A549 (cell line): ENCODE measurements at regions of chr1 and their contacts with region 1.

Region 1: DNA sequence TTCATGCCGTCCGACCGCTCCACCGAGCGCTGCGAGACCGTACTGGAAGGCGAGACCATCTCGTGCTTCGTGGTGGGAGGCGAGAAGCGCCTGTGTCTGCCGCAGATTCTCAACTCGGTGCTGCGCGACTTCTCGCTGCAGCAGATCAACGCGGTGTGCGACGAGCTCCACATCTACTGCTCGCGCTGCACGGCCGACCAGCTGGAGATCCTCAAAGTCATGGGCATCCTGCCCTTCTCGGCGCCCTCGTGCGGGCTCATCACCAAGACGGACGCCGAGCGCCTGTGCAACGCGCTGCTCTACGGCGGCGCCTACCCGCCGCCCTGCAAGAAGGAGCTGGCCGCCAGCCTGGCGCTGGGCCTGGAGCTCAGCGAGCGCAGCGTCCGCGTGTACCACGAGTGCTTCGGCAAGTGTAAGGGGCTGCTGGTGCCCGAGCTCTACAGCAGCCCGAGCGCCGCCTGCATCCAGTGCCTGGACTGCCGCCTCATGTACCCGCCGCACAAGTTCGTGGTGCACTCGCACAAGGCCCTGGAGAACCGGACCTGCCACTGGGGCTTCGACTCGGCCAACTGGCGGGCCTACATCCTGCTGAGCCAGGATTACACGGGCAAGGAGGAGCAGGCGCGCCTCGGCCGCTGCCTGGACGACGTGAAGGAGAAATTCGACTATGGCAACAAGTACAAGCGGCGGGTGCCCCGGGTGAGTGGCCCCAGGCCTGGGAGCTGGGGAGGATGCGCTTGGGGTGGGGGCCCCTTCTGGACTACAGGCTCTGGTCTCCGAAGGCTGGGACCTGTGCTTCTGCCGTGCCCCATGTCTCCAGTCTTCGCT is 1.1 kb downstream of the SKI start:
- DNase-seq: peak in 1 of 2 experiments; percentile 68
- ATAC-seq: peak; percentile 11 to 26; a peak in 3 of 6 replicates
- H3K4me3 ChIP-seq: peak overlapping the region; percentile 67
- H3K27ac ChIP-seq: peak overlapping the region; percentile 76 to 83
- H3K4me1 ChIP-seq: peaks cover 46% of the 10 kb centered on the region
- CTCF ChIP-seq: no peak
- EP300 ChIP-seq: no peak
- POLR2A ChIP-seq: no peak
- RAD21 ChIP-seq: peak in 1 of 2 experiments; percentile 13; a peak in 1 of 5 replicates

Region 2: DNA sequence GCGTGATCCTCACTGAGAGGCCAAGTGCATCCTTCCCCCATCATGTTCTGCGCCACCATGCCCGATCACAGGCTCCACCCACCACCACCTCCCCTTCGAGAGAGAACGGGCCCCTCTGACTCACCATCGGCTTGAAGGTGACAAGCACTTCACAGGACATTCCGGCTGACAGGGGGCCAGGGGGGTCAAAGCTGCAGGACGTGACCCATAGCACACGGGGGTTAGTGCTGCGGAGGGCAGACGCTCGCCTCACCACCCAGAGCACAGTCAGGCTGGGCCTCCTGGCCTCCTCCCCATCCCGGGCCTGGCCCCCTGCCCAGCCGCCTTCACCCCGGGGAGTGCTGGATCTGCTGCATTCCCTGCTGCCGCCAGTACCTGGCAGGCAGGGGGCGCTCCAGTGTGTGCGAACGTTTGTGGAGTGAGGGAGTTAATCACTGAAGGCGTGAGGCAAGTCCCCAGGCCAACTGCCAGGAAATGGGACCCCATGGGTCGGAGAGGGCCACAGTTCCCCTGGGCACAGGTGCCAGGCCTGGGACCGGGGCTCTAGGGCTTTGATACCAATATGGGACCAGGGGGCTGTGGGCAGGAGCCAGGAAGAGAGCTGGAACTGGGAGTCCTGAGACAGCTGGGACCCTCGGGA is 269.3 kb before region 1 on chr1:
- CTCF ChIA-PET with region 1: no interaction called
- POLR2A ChIA-PET with region 1: no interaction called
- DNase-seq: peak; percentile 78 to 89
- ATAC-seq: peak; percentile 92 to 95
- H3K4me3 ChIP-seq: peak overlapping the region; percentile 36
- H3K27ac ChIP-seq: peak overlapping the region; percentile 21 to 29; a peak in 2 of 6 replicates
- H3K4me1 ChIP-seq: peaks cover 6% of the 10 kb centered on the region; the same call in 1 of the 3 replicates
- CTCF ChIP-seq: peak; percentile 75
- EP300 ChIP-seq: no peak
- POLR2A ChIP-seq: no peak
- RAD21 ChIP-seq: peak; percentile 62 to 71

Region 3: GRCh38 chr1:2205191-2205952 is 23.9 kb before region 1 on chr1:
- CTCF ChIA-PET with region 1: interaction called, 11 read pairs
- POLR2A ChIA-PET with region 1: interaction called, 4 read pairs
- DNase-seq: peak in 1 of 2 experiments; percentile 92
- ATAC-seq: peak; percentile 36 to 51; a peak in 5 of 6 replicates
- H3K4me3 ChIP-seq: peak overlapping the region; percentile 53
- H3K27ac ChIP-seq: peak overlapping the region; percentile 85 to 86
- H3K4me1 ChIP-seq: peaks cover 52% of the 10 kb centered on the region
- CTCF ChIP-seq: no peak
- EP300 ChIP-seq: no peak
- POLR2A ChIP-seq: 0 out of 2 replicates have a peak, but pooled peaks have one; percentile 13
- RAD21 ChIP-seq: no peak

Region 4: DNA sequence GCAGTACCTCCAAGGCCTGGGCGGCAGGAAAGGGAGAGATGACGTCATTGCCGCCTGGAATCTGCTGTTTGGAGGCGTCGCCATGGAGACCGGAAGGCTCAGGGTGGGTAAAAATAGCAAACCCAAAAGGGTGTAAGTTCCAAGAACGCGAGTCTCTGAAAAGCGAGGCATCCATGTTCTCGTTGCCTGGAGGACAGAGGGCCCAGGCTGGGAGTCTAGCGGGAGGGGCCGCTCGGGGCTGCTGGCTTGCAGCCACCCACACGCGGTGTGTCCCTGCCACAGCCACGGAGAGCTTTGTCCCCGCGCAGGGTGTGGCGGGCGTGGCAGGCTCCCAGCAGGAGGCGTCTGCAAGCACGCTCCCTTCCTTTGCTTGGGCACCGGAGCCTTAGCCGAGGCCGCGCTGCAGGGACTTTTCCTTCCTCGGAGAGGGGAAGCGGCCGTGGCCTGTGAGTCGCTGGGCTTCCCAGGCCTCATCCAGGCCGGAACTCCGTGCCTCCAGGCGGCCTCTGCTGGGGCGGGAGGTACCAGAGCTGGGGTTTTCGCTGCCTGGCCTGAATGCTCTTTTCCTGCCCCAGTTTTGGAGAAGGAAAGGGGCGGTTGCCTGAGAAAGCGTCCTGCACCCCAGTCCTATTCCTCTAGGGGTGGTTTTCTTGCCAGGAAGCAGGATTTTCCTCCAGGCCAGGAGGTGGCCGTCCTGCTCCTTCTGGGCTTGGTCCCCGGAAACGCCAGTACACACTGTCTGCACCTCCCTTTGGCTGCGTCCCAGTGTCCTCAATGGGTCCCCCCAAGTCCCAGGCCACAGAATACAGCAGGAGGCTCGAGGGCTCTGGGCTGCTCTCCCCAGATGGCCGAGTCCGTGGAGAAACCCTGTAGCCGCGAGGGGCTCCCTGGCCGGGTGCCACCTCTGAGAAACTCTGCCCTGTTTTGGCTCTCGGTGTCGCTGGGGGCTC is 16.4 kb before region 1 on chr1:
- CTCF ChIA-PET with region 1: interaction called, 14 read pairs
- POLR2A ChIA-PET with region 1: interaction called, 9 read pairs
- DNase-seq: peak; percentile 90 to 95
- ATAC-seq: peak; percentile 64 to 72
- H3K4me3 ChIP-seq: peak overlapping the region; percentile 32
- H3K27ac ChIP-seq: peak overlapping the region; percentile 99 to 100
- H3K4me1 ChIP-seq: peaks cover 55% of the 10 kb centered on the region
- CTCF ChIP-seq: no peak
- EP300 ChIP-seq: no peak
- POLR2A ChIP-seq: peak; percentile 41
- RAD21 ChIP-seq: peak in 1 of 2 experiments; percentile 20; a peak in 1 of 5 replicates

Region 5: GRCh38 chr1:2381741-2382620 is 152.7 kb after region 1 on chr1:
- CTCF ChIA-PET with region 1: interaction called, 12 read pairs
- POLR2A ChIA-PET with region 1: no interaction called
- DNase-seq: peak; percentile 67 to 89
- ATAC-seq: peak; percentile 90 to 98
- H3K4me3 ChIP-seq: no peak overlapping the region
- H3K27ac ChIP-seq: no peak overlapping the region
- H3K4me1 ChIP-seq: no peaks in the 10 kb centered on the region
- CTCF ChIP-seq: peak; percentile 68
- EP300 ChIP-seq: no peak
- POLR2A ChIP-seq: no peak
- RAD21 ChIP-seq: peak; percentile 76 to 82

Region 6: GRCh38 chr1:2429780-2430591 is 200.7 kb after region 1 on chr1:
- CTCF ChIA-PET with region 1: no interaction called
- POLR2A ChIA-PET with region 1: no interaction called
- DNase-seq: no peak
- ATAC-seq: peak in 1 of 2 experiments; percentile 32; a peak in 2 of 6 replicates
- H3K4me3 ChIP-seq: no peak overlapping the region
- H3K27ac ChIP-seq: no peak overlapping the region
- H3K4me1 ChIP-seq: no peaks in the 10 kb centered on the region
- CTCF ChIP-seq: peak; percentile 14; the same call in 1 of the 3 replicates
- EP300 ChIP-seq: no peak
- POLR2A ChIP-seq: no peak
- RAD21 ChIP-seq: peak in 1 of 2 experiments; percentile 52; a peak in 2 of 5 replicates